AG04449 (cell line): ENCODE measurements at regions of chr3 and their contacts with region 1.

Region 1: DNA sequence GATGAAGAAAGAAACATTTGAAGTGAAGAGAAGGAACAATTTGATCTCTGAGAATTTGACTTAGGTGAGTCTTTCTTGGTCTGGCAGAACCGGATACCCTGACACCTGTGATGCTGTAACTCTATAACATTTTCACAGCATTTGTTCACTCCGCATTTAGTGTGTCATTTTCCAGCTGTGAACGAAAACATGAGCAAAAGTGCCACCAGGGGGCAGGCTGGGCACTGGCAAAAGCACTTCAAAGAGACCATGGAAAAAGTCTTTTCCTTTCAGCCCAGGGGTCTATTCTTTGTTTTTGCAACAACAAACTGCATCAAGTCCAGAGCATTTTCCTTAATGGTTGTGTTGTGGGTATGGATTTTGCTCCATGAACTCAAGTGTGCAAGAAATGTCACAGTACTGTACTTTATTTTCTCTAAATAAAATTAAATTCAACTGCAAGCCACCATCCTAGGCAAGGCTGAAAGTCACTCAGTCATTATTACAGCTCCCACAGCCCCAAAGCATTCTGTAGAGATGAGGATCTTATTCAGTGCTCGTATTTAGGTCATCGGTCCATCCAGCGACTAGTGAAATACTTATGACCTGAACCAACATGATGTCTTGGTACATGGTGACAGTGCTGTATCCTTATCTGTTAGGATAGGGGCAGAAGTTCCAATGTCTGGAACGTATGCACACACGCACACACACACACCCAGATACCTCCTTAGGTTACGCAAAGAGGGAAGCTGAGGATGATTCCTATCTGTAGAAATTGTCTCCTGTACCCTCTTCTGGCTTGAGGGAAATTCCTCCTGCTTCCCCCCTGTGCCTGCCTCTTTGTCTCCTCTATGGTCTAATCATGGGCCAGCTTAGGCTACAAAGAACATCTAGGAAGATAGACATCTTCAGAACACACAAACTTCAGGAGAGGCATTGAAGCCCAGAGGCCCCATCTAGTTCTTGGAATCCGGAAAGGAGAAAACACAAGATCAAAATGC is 125.5 kb downstream of the GADL1 start:
- DNase-seq: no peak
- H3K4me3 ChIP-seq: no peak overlapping the region
- CTCF ChIP-seq: peak; percentile 79

Region 2: DNA sequence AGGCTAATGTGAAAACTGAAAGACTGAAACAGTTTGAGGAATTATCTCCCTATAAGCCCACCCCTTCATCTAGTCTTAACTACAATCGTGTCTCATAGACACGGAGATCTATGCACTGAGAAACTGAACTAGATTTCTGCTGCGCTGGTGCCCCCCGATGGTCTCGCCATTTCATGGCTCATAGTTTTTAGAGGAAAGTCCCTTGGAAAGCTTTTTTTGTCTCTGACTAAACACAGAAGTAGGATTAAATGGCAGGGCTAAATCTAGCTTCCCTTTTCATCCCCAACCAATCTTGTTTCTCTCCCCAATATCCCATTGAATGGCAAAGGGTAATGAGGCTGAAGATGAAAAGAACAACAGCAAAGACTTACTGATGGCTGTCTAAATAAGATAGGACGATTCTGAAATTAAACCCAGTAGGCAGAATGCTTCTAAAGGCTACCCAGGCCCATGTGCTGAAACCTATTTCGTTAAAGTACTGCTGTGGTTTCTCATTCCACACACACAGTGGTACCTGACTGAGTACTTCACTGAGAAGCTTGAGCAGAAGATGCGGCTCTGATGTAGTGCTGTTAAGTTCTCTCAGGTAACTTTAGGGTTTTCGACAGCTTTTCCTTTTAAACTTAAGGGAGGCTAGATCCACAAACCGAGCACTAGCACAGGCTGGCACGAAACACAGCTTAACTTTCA is 17.2 kb before region 1 on chr3:
- CTCF ChIA-PET with region 1: interaction called, 63 read pairs
- POLR2A ChIA-PET with region 1: no interaction called
- DNase-seq: no peak
- H3K4me3 ChIP-seq: no peak overlapping the region
- CTCF ChIP-seq: peak; percentile 43

Region 3: DNA sequence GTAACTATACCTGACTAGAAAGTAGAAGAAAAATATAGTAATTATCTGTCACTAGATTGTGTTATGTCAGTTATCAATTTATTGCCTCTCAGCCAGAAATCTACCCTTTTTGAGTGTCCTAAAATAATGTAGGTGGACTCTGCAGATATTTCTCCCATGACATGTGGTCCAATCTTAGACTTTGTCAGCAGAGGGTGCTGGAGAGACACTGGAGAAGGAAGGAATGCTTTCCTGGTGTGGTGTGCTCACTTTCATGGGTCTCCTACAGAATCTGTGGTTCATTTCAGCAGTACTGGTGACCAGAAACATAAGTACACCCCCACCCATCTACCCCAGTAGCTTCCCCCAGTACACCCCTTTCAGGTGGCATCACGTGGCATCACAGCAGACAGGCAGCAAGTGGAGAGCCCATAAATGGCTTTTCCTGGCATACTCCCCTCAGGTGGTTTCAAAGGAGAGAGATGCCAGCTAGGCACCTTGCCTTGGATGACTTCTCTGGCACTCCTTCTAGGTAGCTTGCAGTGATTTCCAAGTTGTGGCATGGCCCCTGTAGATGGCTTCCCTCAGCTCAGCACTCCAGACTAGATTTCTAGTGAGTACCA is 10.8 kb after region 1 on chr3:
- CTCF ChIA-PET with region 1: interaction called, 15 read pairs
- POLR2A ChIA-PET with region 1: no interaction called
- DNase-seq: no peak
- H3K4me3 ChIP-seq: no peak overlapping the region
- CTCF ChIP-seq: peak; percentile 42

Region 4: GRCh38 chr3:31132132-31132769 is 363.3 kb after region 1 on chr3:
- CTCF ChIA-PET with region 1: interaction called, 81 read pairs
- POLR2A ChIA-PET with region 1: no interaction called
- DNase-seq: no peak
- H3K4me3 ChIP-seq: no peak overlapping the region
- CTCF ChIP-seq: peak; percentile 38

Region 5: DNA sequence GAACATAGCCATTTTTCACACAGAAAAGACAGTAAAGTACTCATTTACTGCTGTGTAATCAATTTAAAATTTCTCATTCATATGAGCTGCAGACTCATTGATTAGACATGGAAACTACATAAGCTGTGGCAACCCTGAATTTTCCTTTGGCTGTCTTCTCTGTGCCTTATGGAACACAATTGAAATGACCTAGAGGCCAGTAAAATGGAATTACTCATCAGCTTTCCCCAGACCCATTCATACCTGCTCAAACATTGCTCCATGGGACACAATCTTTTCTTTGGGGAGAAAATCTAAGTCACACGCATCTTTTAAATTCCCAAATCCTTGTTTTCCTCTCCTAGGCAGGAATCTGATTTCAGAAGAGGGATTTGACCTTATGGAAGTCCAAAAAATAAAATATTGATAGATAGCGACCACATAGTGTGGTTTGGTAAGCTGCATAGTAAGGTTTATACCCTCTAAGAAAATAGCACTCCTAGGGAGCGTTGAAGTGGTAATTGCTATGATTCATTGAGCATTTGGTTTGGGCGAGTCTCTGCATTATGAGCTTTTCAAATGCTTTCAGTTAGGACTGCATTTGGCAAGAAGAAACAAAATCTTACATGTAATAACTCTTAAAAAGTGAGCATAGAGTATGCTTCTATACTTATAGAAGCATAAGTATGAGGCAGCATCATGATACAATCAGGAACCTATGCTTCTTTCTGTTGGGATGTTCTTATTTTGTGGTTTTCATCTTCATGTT is 368.9 kb after region 1 on chr3:
- CTCF ChIA-PET with region 1: interaction called, 81 read pairs
- POLR2A ChIA-PET with region 1: no interaction called
- DNase-seq: no peak
- H3K4me3 ChIP-seq: no peak overlapping the region
- CTCF ChIP-seq: no peak

Region 6: DNA sequence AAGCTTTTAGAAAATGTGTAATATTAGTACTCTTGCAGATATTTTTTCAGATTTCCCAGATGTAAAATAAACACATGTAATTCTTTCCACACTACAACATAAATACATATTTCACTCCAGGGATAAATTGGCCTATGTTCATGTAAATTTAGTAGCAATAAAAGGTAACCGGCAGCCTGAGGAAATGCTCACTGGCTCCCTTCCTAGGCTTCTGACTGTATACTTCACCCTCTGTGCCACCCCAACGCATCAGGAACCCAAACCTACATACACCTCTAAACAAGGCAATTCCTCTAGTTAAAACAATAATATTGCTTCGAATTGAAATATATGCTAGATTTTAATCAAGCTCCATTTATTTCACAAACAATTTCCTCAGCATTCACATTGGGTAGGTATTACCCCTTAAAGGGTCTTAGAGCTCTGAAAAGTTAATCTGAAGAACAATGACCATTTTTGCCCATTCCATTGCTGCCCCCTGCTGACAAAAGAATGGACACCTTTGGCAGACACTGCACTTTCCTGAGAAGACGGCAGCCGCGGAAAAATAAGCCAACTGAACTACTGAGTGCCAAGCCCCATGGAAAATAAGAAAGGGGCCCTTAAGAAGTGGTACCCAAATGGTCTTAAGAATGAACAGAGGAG is 999.6 kb after region 1 on chr3:
- CTCF ChIA-PET with region 1: interaction called, 20 read pairs
- POLR2A ChIA-PET with region 1: no interaction called
- DNase-seq: no peak
- H3K4me3 ChIP-seq: no peak overlapping the region
- CTCF ChIP-seq: peak; percentile 56